ENCODE measurements at regions of chr16 and their contacts with region 1.

Region 1: DNA sequence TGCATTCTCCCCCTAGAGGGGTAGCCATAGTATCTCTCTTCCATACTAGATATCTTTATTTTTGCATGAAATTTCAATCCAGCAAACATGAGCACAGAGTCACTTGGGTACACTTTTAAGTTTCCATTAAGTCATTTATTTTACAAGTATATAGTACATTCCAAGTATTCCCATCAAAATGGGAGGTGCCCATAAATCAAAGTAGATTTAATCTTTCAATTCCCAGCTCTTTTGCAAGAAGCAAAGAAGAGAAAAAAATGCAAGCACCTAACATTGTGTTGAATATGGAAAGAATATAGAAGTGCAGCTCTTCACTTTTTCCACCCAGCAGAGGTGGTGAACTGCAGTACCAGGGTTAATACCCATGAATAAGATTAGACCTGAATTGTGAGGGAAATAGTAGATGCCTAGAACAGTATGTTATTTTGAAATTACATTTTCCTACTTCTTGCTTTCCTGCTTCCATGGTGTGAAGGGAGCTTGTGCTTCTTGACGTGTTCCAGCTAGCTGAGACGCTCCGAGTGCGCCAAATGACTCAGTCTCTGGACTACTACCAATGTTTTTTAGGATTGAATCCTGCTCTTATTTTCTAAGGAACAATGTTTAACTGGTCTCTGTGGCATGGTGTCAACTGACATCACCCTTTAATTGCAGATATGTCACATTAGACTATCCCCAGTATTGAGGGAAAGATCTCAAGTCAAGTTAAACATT is 151.1 kb upstream of the MAF start:
- DNase-seq: peak; percentile 86
- H3K4me3 ChIP-seq: no peak overlapping the region
- H3K27ac ChIP-seq: peak overlapping the region; percentile 48
- H3K4me1 ChIP-seq: peaks cover 32% of the 10 kb centered on the region
- H3K27me3 ChIP-seq: no peaks in the 10 kb centered on the region
- CTCF ChIP-seq: no peak

Region 2: GRCh38 chr16:79658301-79659033 is 93.2 kb before region 1 on chr16:
- CTCF ChIA-PET with region 1: no interaction called
- dilution Hi-C with region 1: no loop called
- in situ Hi-C with region 1: no loop called
- intact Hi-C with region 1: loop called (anchors 5 kb)
- DNase-seq: peak; percentile 97
- H3K4me3 ChIP-seq: peak overlapping the region in 1 of 3 experiments; percentile 14
- H3K27ac ChIP-seq: peak overlapping the region; percentile 87
- H3K4me1 ChIP-seq: peaks cover 39% of the 10 kb centered on the region
- H3K27me3 ChIP-seq: no peaks in the 10 kb centered on the region
- CTCF ChIP-seq: no peak

Region 3: DNA sequence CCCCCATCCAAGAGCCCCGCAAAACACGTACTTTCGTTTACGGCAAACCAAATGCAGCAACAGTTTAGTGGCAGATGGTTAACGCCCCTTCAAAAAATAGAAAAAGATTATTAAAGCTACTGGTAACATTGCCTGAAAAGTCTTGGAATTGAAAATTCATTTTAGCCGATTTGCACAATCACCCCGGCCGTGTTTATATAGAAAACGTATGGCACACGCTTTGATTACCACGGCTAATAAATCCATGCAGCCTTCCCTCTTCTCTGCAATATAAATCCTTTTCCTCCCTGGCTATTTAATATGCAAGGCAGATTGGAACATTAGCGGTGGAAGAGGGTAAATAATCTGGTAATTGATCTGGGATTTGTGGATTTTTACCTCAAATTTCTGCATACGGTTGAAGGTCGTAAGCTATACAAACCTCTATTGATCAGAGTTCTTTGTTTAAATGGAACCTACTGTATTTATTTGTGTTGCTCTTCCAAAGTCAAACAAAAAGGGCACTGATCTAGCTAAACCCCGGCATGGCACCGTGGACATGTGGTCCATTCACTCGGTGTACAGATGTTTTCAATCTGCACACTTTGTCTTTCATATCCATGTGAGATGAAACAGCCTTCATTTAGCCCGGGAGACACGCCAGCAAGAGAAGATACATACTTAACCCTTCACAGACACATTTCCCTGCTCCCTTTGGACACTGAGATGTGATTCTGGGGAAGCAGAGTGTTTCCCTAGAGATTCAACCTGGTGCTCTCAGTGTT is 87.0 kb after region 1 on chr16:
- CTCF ChIA-PET with region 1: no interaction called
- dilution Hi-C with region 1: no loop called
- in situ Hi-C with region 1: no loop called
- intact Hi-C with region 1: no loop called
- DNase-seq: no peak
- H3K4me3 ChIP-seq: no peak overlapping the region
- H3K27ac ChIP-seq: no peak overlapping the region
- H3K4me1 ChIP-seq: no peaks in the 10 kb centered on the region
- H3K27me3 ChIP-seq: no peaks in the 10 kb centered on the region
- CTCF ChIP-seq: no peak

Measured in mammary epithelial cell (primary cell).